Activated naive CD4-positive, alpha-beta T cell treated with anti-CD3 and anti-CD28 coated beads for 36 hours (primary cell): ENCODE measurements at regions of chr12 and their contacts with region 1.

Region 1: GRCh38 chr12:12916135-12916944 is 25.0 kb downstream of the GPRC5A start:
- DNase-seq: peak; percentile 94
- H3K4me3 Mint-ChIP-seq: no peak overlapping the region
- H3K27ac Mint-ChIP-seq: no peak overlapping the region
- H3K4me1 Mint-ChIP-seq: peaks cover 7% of the 10 kb centered on the region
- H3K27me3 Mint-ChIP-seq: peaks cover 6% of the 10 kb centered on the region

Region 2: GRCh38 chr12:12803186-12803585 is 113.2 kb before region 1 on chr12:
- CTCF ChIA-PET with region 1: no interaction called
- intact Hi-C with region 1: loop called (anchors 1 kb)
- DNase-seq: peak; percentile 61
- H3K4me3 Mint-ChIP-seq: no peak overlapping the region
- H3K27ac Mint-ChIP-seq: no peak overlapping the region
- H3K4me1 Mint-ChIP-seq: peaks cover 53% of the 10 kb centered on the region
- H3K27me3 Mint-ChIP-seq: no peaks in the 10 kb centered on the region

Region 3: GRCh38 chr12:12975322-12976077 is 59.2 kb after region 1 on chr12:
- CTCF ChIA-PET with region 1: interaction called, 14 read pairs
- intact Hi-C with region 1: loop called (anchors 1 kb)
- DNase-seq: peak; percentile 49
- H3K4me3 Mint-ChIP-seq: no peak overlapping the region
- H3K27ac Mint-ChIP-seq: no peak overlapping the region
- H3K4me1 Mint-ChIP-seq: no peaks in the 10 kb centered on the region
- H3K27me3 Mint-ChIP-seq: no peaks in the 10 kb centered on the region

Region 4: GRCh38 chr12:12983420-12984035 is 67.2 kb after region 1 on chr12:
- CTCF ChIA-PET with region 1: interaction called, 26 read pairs
- intact Hi-C with region 1: loop called (anchors 1 kb)
- DNase-seq: peak; percentile 38
- H3K4me3 Mint-ChIP-seq: no peak overlapping the region
- H3K27ac Mint-ChIP-seq: no peak overlapping the region
- H3K4me1 Mint-ChIP-seq: no peaks in the 10 kb centered on the region
- H3K27me3 Mint-ChIP-seq: no peaks in the 10 kb centered on the region

Region 5: DNA sequence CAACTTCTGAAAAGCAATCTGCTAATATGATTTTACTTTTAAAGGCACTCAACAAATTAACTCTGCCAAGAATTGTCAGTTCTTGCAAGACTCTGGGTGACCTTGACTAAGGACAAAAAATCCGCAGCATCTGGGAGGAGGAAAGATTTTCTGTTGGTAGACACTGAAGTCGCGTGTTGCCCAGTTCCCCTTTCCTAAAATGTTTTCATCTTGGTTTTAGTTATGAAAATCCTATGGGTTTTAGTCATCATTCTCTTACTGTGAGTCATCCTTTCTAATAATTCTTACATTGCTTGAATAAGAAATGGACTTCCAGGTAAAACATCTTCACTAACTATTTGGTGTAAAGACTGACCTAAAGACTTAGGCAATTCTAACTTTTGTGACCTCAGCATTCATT is 178.0 kb after region 1 on chr12:
- CTCF ChIA-PET with region 1: interaction called, 15 read pairs
- intact Hi-C with region 1: loop called (anchors 1 kb)
- DNase-seq: no peak
- H3K4me3 Mint-ChIP-seq: no peak overlapping the region
- H3K27ac Mint-ChIP-seq: no peak overlapping the region
- H3K4me1 Mint-ChIP-seq: peaks cover 16% of the 10 kb centered on the region
- H3K27me3 Mint-ChIP-seq: no peaks in the 10 kb centered on the region

Region 6: DNA sequence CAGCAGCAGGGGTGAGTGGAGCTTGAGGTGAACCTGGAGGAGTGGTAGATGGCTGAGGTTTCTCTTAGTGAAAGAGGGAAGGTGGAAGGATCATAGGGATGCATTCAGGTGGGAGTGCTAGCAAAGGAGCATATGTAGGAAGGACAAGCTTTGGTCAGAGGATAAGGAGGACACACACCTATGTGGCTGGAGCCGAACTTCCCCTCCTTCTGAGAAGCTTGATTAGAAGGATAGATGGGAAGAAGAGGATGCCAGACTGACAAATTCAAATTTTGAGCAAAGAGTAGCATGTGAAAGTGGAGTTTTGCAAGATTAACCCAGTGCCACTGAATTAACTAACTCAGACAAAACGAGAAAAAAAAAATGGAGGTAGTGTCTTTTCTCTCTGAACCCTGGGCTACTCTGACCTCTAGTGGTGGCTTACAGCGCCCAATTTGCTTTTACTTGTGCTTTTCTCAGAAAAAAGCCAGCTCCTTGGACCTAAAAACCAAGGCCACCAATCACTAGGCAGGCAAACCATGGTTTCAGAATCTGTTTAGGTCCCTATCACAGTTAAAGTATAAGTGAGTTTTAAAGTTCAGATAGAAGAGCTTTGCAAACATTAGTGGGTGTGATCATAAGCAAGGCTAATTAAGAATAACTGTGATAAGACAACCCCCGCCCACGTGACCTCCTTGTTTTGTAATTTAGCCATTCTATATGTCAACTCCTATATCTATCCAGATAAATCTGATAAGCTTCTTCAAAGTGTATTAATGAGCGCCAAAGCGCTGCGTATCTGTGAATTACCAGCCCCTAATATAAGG is 295.7 kb after region 1 on chr12:
- CTCF ChIA-PET with region 1: interaction called, 91 read pairs
- intact Hi-C with region 1: loop called (anchors 1 kb)
- DNase-seq: peak; percentile 86
- H3K4me3 Mint-ChIP-seq: no peak overlapping the region
- H3K27ac Mint-ChIP-seq: no peak overlapping the region
- H3K4me1 Mint-ChIP-seq: peaks cover 20% of the 10 kb centered on the region
- H3K27me3 Mint-ChIP-seq: peaks cover 2% of the 10 kb centered on the region

Region 7: DNA sequence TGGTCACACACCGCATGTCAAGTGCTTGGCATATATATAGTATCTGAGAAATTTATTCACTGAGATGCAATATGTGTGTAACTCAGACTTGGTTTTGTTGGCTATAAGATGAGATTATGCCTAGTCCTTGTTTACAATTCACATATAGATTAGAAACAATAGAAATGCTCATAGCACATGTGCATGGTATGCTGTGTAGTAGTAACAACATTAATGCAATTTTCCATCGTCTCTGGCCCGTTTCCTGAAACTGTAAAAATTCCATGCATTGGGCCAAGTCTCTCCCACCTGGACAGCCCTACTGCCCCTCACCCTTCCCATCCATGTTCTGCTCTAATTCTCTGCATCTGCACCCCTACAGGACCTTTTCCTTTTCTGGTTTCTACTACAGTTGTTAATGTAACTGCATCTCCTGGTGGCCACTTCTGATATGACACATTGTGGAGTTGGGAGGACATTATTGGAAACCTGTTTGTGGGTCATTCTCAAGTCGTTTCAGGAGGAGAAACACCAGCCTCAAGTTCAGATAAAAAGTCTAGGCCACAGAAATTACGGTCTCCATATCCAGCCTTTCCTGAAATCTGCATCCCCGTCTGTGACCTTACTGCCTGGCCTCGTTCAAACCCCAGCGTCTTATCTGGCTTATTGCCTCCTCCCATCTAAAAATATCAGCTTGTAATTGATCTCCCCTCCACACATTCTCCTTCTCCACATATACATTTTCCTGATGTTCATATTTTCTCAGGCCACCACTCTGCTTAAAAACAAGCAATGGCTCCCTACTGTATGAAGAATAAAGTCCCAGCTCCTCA is 317.7 kb after region 1 on chr12:
- CTCF ChIA-PET with region 1: interaction called, 4 read pairs
- intact Hi-C with region 1: loop called (anchors 1 kb)
- DNase-seq: peak; percentile 55
- H3K4me3 Mint-ChIP-seq: no peak overlapping the region
- H3K27ac Mint-ChIP-seq: no peak overlapping the region
- H3K4me1 Mint-ChIP-seq: no peaks in the 10 kb centered on the region
- H3K27me3 Mint-ChIP-seq: peaks cover 3% of the 10 kb centered on the region